CD4-positive, alpha-beta memory T cell (primary cell): ENCODE measurements at regions of chr7 and their contacts with region 1.

Region 1: GRCh38 chr7:43582503-43583423 is at the start of gene STK17A:
- DNase-seq: peak; percentile 92 to 99 (median 96)
- H3K4me3 ChIP-seq: peak within 1 kb of the TSS; percentile 73 to 97
- H3K4me3 Mint-ChIP-seq: peak within 1 kb of the TSS; percentile 93 to 99 (median 98)
- H3K27ac ChIP-seq: peak within 1 kb of the TSS; percentile 87
- H3K27ac Mint-ChIP-seq: peak within 1 kb of the TSS; percentile 93 to 100 (median 98)
- H3K4me1 ChIP-seq: peaks cover 19% of the 10 kb centered on the region
- H3K4me1 Mint-ChIP-seq: peaks cover 13 to 47% (median 18%) of the 10 kb centered on the region in 4 donors
- H3K27me3 ChIP-seq: no peaks in the 10 kb centered on the region
- H3K27me3 Mint-ChIP-seq: peaks cover 2 to 9% of the 10 kb centered on the region in 2 donors
- total RNA-seq, gene STK17A: 118 to 119 TPM

Region 2: GRCh38 chr7:43491984-43492383 is 90.8 kb before region 1 on chr7:
- CTCF ChIA-PET with region 1: no interaction called
- POLR2A ChIA-PET with region 1: no interaction called
- intact Hi-C with region 1: no loop called
- DNase-seq: no peak
- H3K4me3 ChIP-seq: no peak overlapping the region
- H3K4me3 Mint-ChIP-seq: no peak overlapping the region
- H3K27ac ChIP-seq: no peak overlapping the region
- H3K27ac Mint-ChIP-seq: no peak overlapping the region
- H3K4me1 ChIP-seq: no peaks in the 10 kb centered on the region
- H3K4me1 Mint-ChIP-seq: peaks cover 0 to 4% (median 0%) of the 10 kb centered on the region in 4 donors
- H3K27me3 ChIP-seq: no peaks in the 10 kb centered on the region
- H3K27me3 Mint-ChIP-seq: peaks cover 4 to 10% of the 10 kb centered on the region in 2 donors

Region 3: DNA sequence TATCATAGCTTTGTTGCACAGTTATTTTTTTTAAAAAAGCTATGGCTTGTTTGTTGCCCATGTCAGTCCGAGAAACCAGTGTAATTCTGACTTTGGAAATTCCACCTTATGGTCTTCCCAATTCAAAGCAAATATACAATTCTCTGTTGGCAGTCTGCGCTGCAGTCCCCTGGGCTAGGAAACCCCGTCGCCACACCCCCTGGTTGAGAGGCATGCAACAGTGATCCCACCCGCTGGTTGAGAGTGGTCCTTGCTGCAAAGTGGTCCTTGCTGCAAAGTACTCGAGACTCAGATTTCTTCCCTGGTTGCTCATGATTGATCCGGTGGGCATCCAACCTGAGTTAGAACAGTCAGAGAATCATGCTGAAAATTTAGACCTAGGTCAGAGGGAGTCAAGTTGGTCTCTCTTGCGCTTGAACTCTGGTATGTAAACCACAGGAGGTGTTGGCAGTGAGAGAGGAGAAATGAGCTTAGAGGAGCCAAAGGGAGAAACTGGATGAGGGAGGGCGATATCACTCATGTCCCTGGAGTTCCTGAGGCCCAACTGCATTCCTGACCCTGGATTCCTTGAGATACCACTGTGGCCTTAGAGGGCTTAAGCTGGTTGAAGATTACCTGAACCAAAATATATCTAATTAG is 44.9 kb before region 1 on chr7:
- CTCF ChIA-PET with region 1: no interaction called
- POLR2A ChIA-PET with region 1: no interaction called
- intact Hi-C with region 1: no loop called
- DNase-seq: no peak
- H3K4me3 ChIP-seq: no peak overlapping the region
- H3K4me3 Mint-ChIP-seq: no peak overlapping the region
- H3K27ac ChIP-seq: no peak overlapping the region
- H3K27ac Mint-ChIP-seq: no peak overlapping the region
- H3K4me1 ChIP-seq: no peaks in the 10 kb centered on the region
- H3K4me1 Mint-ChIP-seq: no peaks in the 10 kb centered on the region
- H3K27me3 ChIP-seq: no peaks in the 10 kb centered on the region
- H3K27me3 Mint-ChIP-seq: peaks cover 5 to 8% of the 10 kb centered on the region in 2 donors

Region 4: GRCh38 chr7:43572516-43573049 is 10.2 kb before region 1 on chr7:
- CTCF ChIA-PET with region 1: interaction called, 45 read pairs
- POLR2A ChIA-PET with region 1: interaction called, 6 read pairs
- intact Hi-C with region 1: no loop called
- DNase-seq: peak in 2 of 5 donors; percentile 21 to 46
- H3K4me3 ChIP-seq: no peak overlapping the region
- H3K4me3 Mint-ChIP-seq: no peak overlapping the region
- H3K27ac ChIP-seq: no peak overlapping the region
- H3K27ac Mint-ChIP-seq: peak overlapping the region in 2 of 7 donors; percentile 23 to 51
- H3K4me1 ChIP-seq: peaks cover 5% of the 10 kb centered on the region
- H3K4me1 Mint-ChIP-seq: peaks cover 3 to 5% (median 4%) of the 10 kb centered on the region in 4 donors
- H3K27me3 ChIP-seq: no peaks in the 10 kb centered on the region
- H3K27me3 Mint-ChIP-seq: no peaks in the 10 kb centered on the region

Region 5: DNA sequence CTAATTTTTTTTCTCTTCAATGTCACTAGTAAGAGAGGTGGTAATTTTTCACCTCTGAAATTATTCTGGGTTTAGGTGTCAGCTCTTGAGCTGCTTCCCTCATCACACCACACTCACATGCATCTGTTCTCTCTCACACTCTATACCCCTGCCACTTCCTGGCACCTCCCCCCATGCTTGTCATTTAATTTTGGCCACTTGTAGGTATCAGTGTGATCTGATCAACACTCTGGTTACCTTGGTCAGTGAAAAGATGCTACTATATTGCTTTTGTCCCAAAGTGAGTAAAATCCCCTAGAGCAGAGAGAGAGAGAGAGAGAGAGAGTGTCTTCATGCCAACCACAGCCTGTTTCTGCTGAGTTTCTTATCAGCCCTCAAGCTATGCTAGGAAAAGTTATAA is 42.7 kb after region 1 on chr7:
- CTCF ChIA-PET with region 1: interaction called, 46 read pairs
- POLR2A ChIA-PET with region 1: interaction called, 39 read pairs
- intact Hi-C with region 1: loop called (anchors 2 kb)
- DNase-seq: peak; percentile 63 to 82 (median 68)
- H3K4me3 ChIP-seq: no peak overlapping the region
- H3K4me3 Mint-ChIP-seq: peak overlapping the region; percentile 59 to 73 (median 70)
- H3K27ac ChIP-seq: peak overlapping the region; percentile 30
- H3K27ac Mint-ChIP-seq: peak overlapping the region in 6 of 7 donors; percentile 84 to 97 (median 89)
- H3K4me1 ChIP-seq: peaks cover 96% of the 10 kb centered on the region
- H3K4me1 Mint-ChIP-seq: peaks cover 3 to 94% (median 69%) of the 10 kb centered on the region in 4 donors
- H3K27me3 ChIP-seq: no peaks in the 10 kb centered on the region
- H3K27me3 Mint-ChIP-seq: no peaks in the 10 kb centered on the region

Region 6: GRCh38 chr7:43669286-43670081 is 86.7 kb after region 1 on chr7:
- CTCF ChIA-PET with region 1: interaction called, 26 read pairs
- POLR2A ChIA-PET with region 1: interaction called, 31 read pairs
- intact Hi-C with region 1: no loop called
- DNase-seq: peak; percentile 77 to 93 (median 79)
- H3K4me3 ChIP-seq: peak overlapping the region in 1 of 2 donors; percentile 34
- H3K4me3 Mint-ChIP-seq: peak overlapping the region; percentile 82 to 92 (median 85)
- H3K27ac ChIP-seq: peak overlapping the region; percentile 66
- H3K27ac Mint-ChIP-seq: peak overlapping the region; percentile 85 to 98 (median 96)
- H3K4me1 ChIP-seq: peaks cover 60% of the 10 kb centered on the region
- H3K4me1 Mint-ChIP-seq: peaks cover 43 to 86% (median 68%) of the 10 kb centered on the region in 4 donors
- H3K27me3 ChIP-seq: no peaks in the 10 kb centered on the region
- H3K27me3 Mint-ChIP-seq: no peaks in the 10 kb centered on the region

Region 7: DNA sequence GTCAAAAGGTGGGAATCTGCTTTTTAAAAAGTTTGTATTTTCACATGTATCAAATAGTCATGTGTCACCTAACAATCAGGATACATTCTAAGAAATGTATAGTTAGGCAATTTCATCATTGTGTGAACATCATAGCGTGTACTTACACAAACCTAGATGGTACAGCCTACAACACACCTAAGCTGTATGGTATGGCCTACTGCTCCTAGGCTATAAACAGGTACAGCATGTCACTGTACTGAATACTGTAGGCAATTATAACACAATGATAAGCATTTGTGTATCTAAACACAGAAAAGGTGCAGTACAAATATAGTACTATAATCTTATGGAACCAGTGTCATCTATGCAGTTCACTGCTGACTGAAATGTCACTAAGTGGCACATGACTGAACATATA is 128.7 kb after region 1 on chr7:
- CTCF ChIA-PET with region 1: interaction called, 140 read pairs
- POLR2A ChIA-PET with region 1: interaction called, 11 read pairs
- intact Hi-C with region 1: no loop called
- DNase-seq: no peak
- H3K4me3 ChIP-seq: no peak overlapping the region
- H3K4me3 Mint-ChIP-seq: no peak overlapping the region
- H3K27ac ChIP-seq: no peak overlapping the region
- H3K27ac Mint-ChIP-seq: no peak overlapping the region
- H3K4me1 ChIP-seq: no peaks in the 10 kb centered on the region
- H3K4me1 Mint-ChIP-seq: peaks cover 20 to 43% (median 26%) of the 10 kb centered on the region in 4 donors
- H3K27me3 ChIP-seq: no peaks in the 10 kb centered on the region
- H3K27me3 Mint-ChIP-seq: no peaks in the 10 kb centered on the region

Region 8: DNA sequence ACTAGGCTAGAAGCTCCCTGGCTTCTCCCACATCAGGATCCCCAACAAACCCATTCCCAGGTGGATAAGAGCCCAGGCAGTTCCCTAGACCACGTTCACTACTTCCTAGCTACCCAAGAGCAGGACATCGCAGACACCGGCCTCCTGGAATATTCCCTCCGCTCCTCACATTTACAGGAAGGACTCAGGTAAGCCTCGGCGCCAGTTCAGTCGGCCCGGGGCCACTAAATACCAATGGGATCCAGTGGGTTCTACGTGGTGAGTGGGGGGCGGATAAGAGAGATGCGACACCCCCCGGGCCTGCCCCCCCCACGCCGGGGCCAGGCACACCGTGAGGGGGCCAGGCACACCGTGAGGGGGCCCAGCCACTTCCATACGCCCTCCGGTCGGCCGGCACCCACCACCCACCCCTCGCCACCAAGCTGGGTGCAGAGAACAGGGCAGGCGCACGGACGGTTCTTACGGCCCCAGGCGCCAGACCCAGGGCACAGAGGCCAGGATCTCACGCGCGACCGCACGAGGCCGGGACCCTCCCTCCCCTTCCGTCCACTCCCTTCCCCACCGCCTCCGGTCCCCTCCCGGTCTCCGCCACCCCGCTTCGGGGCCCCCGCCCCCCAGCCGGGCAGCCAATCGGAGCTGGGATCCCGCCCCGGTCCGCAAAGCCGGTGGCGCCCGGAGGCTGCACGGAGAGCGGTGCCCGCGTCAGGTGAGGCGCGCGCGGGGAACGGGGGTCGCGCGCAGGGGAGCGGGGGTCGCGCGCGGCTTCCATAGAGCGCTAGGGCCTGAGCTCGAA is 175.5 kb after region 1 on chr7 and contains the start of gene BLVRA:
- CTCF ChIA-PET with region 1: interaction called, 11 read pairs
- POLR2A ChIA-PET with region 1: interaction called, 7 read pairs
- intact Hi-C with region 1: no loop called
- DNase-seq: peak; percentile 59 to 75 (median 69)
- H3K4me3 ChIP-seq: peak within 1 kb of the TSS; percentile 57 to 79
- H3K4me3 Mint-ChIP-seq: peak within 1 kb of the TSS; percentile 86 to 95 (median 91)
- H3K27ac ChIP-seq: peak within 1 kb of the TSS; percentile 77
- H3K27ac Mint-ChIP-seq: peak within 1 kb of the TSS; percentile 79 to 95 (median 89)
- H3K4me1 ChIP-seq: peaks cover 36% of the 10 kb centered on the region
- H3K4me1 Mint-ChIP-seq: peaks cover 22 to 42% (median 34%) of the 10 kb centered on the region in 4 donors
- H3K27me3 ChIP-seq: no peaks in the 10 kb centered on the region
- H3K27me3 Mint-ChIP-seq: no peaks in the 10 kb centered on the region
- total RNA-seq, gene BLVRA: 18.1 to 19.3 TPM

Region 9: DNA sequence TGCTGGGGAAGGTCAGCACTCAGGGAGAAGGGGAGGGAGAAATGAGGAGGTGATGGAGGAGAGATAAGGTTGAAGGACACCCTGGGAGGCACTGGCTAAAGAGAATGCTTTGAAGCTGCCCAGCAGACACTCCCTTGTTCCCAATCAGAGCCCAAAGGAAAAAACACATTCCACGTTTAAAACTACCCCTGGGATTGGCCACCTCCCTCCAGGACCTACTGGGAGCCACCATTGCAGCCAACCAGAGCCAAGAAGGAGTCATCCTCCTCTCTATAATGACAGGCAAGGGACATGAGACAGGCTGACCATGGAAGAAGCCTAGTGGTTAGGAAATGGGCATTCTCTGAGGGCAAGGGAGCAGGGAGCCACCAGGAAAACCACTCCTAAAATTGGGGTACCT is 1352.2 kb after region 1 on chr7:
- CTCF ChIA-PET with region 1: no interaction called
- POLR2A ChIA-PET with region 1: no interaction called
- intact Hi-C with region 1: no loop called
- DNase-seq: no peak
- H3K4me3 ChIP-seq: no peak overlapping the region
- H3K4me3 Mint-ChIP-seq: no peak overlapping the region
- H3K27ac ChIP-seq: no peak overlapping the region
- H3K27ac Mint-ChIP-seq: peak overlapping the region in 1 of 7 donors; percentile 41
- H3K4me1 ChIP-seq: no peaks in the 10 kb centered on the region
- H3K4me1 Mint-ChIP-seq: no peaks in the 10 kb centered on the region
- H3K27me3 ChIP-seq: no peaks in the 10 kb centered on the region
- H3K27me3 Mint-ChIP-seq: peaks cover 4% of the 10 kb centered on the region in 2 donors